ENCODE measurements at regions of chr17 and their contacts with region 1.

Region 1: GRCh38 chr17:35088881-35089585 is 25.5 kb upstream of the RFFL start:
- DNase-seq: peak; percentile 94
- H3K4me3 ChIP-seq: peak overlapping the region; percentile 74 to 97 (median 92)
- H3K27ac ChIP-seq: peak overlapping the region; percentile 87 to 94 (median 92)
- H3K4me1 ChIP-seq: peaks cover 13 to 35% (median 26%) of the 10 kb centered on the region in 4 donors
- H3K27me3 ChIP-seq: no peaks in the 10 kb centered on the region
- CTCF ChIP-seq: peak; percentile 85 to 89 (median 88)
- EP300 ChIP-seq: no peak
- POLR2A ChIP-seq: peak; percentile 51

Region 2: DNA sequence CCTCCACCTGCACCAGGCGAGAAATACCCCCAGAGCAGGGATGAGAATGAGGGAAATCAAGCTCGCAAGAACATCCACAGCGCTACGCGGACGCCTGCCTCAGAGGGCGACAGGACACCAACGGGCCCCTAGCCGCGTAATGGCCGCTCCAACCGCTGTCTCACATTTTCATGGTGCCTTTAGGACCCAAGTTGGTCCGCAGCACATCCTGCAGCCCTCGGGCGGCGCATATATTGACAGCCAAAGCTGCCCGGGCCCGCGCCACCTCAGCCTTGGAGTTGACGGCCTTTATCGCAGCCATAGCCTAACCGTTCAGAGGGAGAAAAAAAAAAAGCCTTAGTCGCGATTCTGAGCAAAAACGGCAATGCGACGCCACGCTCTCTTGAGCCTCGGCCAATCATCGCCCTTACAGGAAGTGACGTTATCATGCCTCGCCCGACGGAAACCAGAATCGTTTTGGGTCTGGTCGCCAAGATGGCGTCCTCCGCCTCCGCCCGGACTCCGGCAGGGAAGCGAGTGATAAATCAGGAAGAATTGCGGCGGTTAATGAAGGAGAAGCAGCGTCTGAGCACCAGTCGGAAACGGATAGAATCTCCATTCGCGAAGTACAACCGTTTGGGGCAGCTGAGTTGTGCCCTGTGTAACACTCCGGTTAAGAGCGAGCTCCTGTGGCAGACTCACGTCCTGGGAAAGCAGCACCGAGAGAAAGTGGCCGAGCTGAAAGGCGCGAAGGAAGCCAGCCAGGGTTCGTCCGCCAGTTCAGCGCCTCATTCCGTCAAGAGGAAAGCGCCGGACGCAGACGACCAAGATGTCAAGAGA is 127.7 kb before region 1 on chr17 and contains the starts of genes CCT6B and ZNF830:
- intact Hi-C with region 1: loop called (anchors 2 kb)
- DNase-seq: peak; percentile 98
- H3K4me3 ChIP-seq: peak within 1 kb of the TSS; percentile 78 to 95 (median 86)
- H3K27ac ChIP-seq: peak within 1 kb of the TSS; percentile 92 to 96 (median 94)
- H3K4me1 ChIP-seq: peaks cover 22 to 32% (median 28%) of the 10 kb centered on the region in 4 donors
- H3K27me3 ChIP-seq: no peaks in the 10 kb centered on the region
- CTCF ChIP-seq: peak in 1 of 3 experiments; percentile 13
- EP300 ChIP-seq: no peak
- POLR2A ChIP-seq: no peak
- total RNA-seq, gene CCT6B: 2.6 to 5.8 (median 4.5) TPM
- total RNA-seq, gene ZNF830: 10.8 to 16.6 (median 12.6) TPM

Region 3: DNA sequence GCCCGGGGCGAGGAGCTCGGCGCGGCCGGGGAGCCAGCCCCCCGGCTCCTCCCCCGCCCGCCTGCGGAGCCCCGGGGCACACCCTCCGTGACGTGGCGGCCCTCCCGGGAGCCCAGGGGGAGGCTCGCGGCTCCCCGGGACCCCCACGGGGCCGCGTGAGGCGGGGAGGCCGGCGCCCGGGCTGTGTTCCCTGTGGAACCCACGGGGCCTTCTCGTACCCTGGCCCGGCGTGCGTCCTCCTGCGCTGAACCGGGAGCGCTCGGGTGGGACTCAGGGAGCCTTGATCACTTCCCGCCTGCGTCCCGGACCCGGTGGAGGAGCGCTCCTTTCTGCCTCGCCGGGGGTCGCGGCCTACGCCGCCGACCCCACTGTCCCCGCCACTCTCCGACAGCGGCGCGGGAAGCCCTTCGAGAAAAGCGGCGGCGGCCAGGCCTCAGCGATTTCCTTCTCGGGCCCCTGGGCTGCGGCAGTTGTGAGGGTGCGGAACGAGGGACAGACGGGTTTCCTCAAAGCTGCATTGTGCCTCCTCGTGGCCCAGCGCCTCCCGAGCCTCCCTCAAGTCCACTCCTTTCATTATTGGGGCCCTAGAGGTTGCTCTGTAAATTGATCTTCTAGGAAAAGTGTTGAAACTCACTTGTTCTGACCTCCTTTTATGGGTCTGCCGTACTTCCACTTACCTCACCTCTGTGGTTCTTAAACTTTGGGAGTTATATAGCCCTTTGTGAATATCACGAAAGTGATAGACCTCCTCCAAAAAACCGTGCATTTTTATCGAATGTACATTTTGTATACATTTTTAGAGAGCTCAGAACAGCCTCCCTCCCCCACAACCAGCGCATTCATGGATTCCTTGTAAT is 108.1 kb before region 1 on chr17:
- intact Hi-C with region 1: loop called (anchors 2 kb)
- DNase-seq: peak; percentile 95
- H3K4me3 ChIP-seq: peak overlapping the region; percentile 83 to 95 (median 92)
- H3K27ac ChIP-seq: peak overlapping the region; percentile 95 to 100 (median 100)
- H3K4me1 ChIP-seq: peaks cover 23 to 55% (median 44%) of the 10 kb centered on the region in 4 donors
- H3K27me3 ChIP-seq: no peaks in the 10 kb centered on the region
- CTCF ChIP-seq: peak in 2 of 3 experiments; percentile 33 to 41
- EP300 ChIP-seq: no peak
- POLR2A ChIP-seq: peak; percentile 63

Region 4: GRCh38 chr17:34998205-34998604 is 90.8 kb before region 1 on chr17:
- intact Hi-C with region 1: loop called (anchors 5 kb)
- DNase-seq: peak; percentile 93
- H3K4me3 ChIP-seq: peak overlapping the region; percentile 5 to 24 (median 13)
- H3K27ac ChIP-seq: peak overlapping the region; percentile 84 to 89 (median 88)
- H3K4me1 ChIP-seq: peaks cover 24 to 61% (median 54%) of the 10 kb centered on the region in 4 donors
- H3K27me3 ChIP-seq: no peaks in the 10 kb centered on the region
- CTCF ChIP-seq: peak; percentile 57 to 76 (median 70)
- EP300 ChIP-seq: no peak
- POLR2A ChIP-seq: no peak